ENCODE measurements at regions of chr12 and their contacts with region 1.

Region 1: DNA sequence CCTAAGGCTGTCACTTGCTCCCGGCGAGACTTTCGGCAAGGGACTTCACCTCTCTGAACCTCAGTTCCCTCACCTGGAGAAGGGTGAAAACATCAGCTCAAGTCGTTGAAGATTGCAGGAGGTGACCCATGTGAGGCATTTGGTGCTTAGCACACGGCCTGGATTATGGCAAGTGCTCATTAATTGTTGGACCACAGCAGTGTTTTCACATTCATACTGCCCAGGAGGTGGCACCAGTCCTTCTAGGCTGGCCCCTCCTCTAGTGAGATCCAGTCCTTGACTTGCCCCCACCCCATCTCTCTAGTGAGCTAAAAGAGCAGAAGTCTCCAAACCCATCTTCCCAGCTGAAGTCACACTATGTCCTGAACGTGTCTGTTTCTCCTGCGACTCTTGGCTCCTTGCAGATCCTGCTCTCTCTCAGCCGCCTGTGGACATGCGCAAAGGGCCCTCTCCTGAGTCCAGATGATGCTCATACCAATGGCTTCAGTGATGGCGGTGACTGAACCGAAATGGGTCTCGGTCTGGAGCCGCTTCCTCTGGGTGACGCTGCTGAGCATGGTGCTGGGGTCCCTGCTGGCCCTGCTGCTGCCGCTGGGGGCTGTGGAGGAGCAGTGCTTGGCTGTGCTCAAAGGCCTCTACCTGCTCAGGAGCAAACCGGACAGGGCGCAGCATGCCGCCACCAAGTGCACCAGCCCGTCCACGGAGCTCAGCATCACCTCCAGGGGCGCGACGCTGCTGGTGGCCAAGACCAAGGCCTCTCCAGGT is 1.6 kb downstream of the FICD start:
- DNase-seq: no peak
- ATAC-seq: no peak
- H3K4me3 ChIP-seq: no peak overlapping the region
- H3K4me3 Mint-ChIP-seq: peak overlapping the region; percentile 89 to 96 (median 95)
- H3K27ac ChIP-seq: peak overlapping the region; percentile 61
- H3K27ac Mint-ChIP-seq: peak overlapping the region; percentile 76 to 90
- H3K4me1 ChIP-seq: peaks cover 5 to 30% of the 10 kb centered on the region in 2 experiments
- H3K4me1 Mint-ChIP-seq: peaks cover 26 to 40% (median 36%) of the 10 kb centered on the region in 3 donors
- H3K27me3 ChIP-seq: no peaks in the 10 kb centered on the region
- H3K27me3 Mint-ChIP-seq: no peaks in the 10 kb centered on the region

Region 2: DNA sequence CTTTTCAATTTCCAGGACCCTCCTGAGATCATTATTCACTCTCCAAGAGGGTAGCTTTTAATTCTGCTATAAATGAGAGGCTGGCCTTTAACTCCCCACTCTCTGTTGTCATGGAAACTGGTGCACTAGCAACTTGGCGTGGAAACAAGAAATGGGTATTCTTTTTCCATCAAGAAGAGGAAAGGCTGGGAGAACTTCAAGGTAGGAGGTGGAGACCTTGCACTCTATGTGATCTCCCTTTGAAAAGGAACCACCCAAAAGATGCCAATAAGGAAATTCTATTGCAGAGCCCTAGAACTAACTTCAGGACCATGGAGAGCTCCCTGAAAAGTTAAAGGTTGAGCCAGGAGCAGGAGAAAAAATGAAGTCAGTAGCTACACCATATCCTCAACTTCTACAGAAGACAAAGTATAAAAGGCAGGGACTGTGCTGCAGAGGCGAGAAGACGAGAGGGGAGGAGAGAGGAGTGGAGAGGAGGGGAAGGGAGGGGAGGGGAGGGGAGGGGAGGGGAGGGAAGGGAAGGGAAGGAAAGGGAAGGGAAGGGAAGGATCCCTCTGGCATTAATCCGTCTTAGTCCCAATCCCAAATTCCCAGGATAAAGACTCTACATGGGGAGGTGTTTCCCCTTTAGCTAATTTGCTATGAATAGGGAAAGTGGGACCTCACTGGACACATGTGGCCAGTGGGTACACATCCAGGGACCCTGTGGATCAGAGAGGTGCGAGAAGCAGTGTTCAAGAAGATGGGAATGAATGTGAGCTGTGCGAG is 48.3 kb before region 1 on chr12:
- CTCF ChIA-PET with region 1: no interaction called
- POLR2A ChIA-PET with region 1: no interaction called
- DNase-seq: peak in 5 of 35 experiments; percentile 2 to 52 (median 3)
- ATAC-seq: no peak
- H3K4me3 ChIP-seq: no peak overlapping the region
- H3K4me3 Mint-ChIP-seq: no peak overlapping the region
- H3K27ac ChIP-seq: no peak overlapping the region
- H3K27ac Mint-ChIP-seq: no peak overlapping the region
- H3K4me1 ChIP-seq: no peaks in the 10 kb centered on the region
- H3K4me1 Mint-ChIP-seq: no peaks in the 10 kb centered on the region
- H3K27me3 ChIP-seq: peaks cover 0 to 15% of the 10 kb centered on the region in 2 experiments
- H3K27me3 Mint-ChIP-seq: peaks cover 33 to 41% of the 10 kb centered on the region in 2 donors

Region 3: GRCh38 chr12:108542320-108542719 is 25.6 kb after region 1 on chr12:
- CTCF ChIA-PET with region 1: interaction called in 1 of 2 experiments, 4 read pairs
- POLR2A ChIA-PET with region 1: interaction called in 1 of 2 experiments, 15 read pairs
- DNase-seq: no peak
- ATAC-seq: no peak
- H3K4me3 ChIP-seq: no peak overlapping the region
- H3K4me3 Mint-ChIP-seq: no peak overlapping the region
- H3K27ac ChIP-seq: no peak overlapping the region
- H3K27ac Mint-ChIP-seq: no peak overlapping the region
- H3K4me1 ChIP-seq: no peaks in the 10 kb centered on the region
- H3K4me1 Mint-ChIP-seq: peaks cover 19 to 30% (median 27%) of the 10 kb centered on the region in 3 donors
- H3K27me3 ChIP-seq: no peaks in the 10 kb centered on the region
- H3K27me3 Mint-ChIP-seq: no peaks in the 10 kb centered on the region